Gastrocnemius medialis (tissue), 4 donors: ENCODE measurements at regions of chr9 and their contacts with region 1.

Region 1: DNA sequence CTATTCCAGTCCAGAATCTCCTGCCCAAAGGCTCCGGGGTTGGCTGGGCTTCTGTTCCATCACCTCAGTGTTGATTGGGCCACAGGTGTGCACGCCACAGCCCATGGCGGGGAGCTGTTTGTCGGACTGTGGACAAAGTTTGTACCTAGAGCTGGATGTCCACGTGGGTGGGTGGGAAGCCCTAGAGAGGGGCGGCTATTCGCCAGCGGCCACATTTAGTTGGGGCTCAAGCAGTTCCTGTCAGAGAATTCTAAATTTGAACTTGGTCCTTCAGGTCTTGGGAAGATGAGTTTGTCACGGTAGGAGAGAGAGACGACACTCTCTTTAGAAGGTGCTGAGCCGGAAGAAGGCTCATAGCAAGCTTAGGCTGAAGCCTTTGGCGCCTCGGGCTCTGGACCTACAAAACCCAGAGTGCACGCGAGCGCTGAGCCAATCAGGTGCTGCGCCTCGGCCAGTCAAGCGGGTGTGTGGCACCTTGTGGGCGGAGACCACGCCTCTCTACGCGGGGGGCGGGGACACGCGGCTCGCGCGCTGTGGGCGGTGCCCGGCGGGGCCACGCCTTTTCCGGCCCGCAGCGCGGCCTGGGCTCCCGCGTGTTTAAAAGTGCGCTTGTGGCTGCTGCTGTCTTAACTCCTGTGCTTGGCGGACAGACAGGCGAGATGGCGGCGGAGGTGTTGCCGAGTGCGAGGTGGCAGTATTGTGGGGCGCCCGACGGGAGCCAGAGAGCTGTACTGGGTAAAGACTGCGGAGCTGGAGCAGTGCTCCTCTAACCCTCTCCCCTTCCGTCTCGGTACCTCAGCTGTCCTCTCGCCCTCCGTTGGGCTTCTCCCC is at the start of gene POLR1E:
- DNase-seq: peak; percentile 86 to 94
- ATAC-seq: peak; percentile 95
- H3K4me3 ChIP-seq: peak within 1 kb of the TSS; percentile 75 to 89 (median 82)
- H3K27ac ChIP-seq: peak within 1 kb of the TSS; percentile 85 to 89 (median 88)
- H3K4me1 ChIP-seq: peaks cover 21 to 26% of the 10 kb centered on the region in 2 donors
- H3K27me3 ChIP-seq: no peaks in the 10 kb centered on the region
- CTCF ChIP-seq: no peak
- POLR2A ChIP-seq: peak; percentile 77 to 80
- total RNA-seq, gene POLR1E: 16.7 to 22.3 (median 17.6) TPM

Region 2: GRCh38 chr9:37415011-37415719 is 70.4 kb before region 1 on chr9:
- in situ Hi-C with region 1: loop called in 1 of 4 experiments (anchors 10 kb)
- intact Hi-C with region 1: loop called (anchors 5 kb)
- DNase-seq: peak in 1 of 2 donors; percentile 54
- ATAC-seq: peak; percentile 50 to 72
- H3K4me3 ChIP-seq: no peak overlapping the region
- H3K27ac ChIP-seq: no peak overlapping the region
- H3K4me1 ChIP-seq: peaks cover 5 to 23% of the 10 kb centered on the region in 2 donors
- H3K27me3 ChIP-seq: no peaks in the 10 kb centered on the region
- CTCF ChIP-seq: peak; percentile 71 to 82 (median 77)
- POLR2A ChIP-seq: no peak

Region 3: DNA sequence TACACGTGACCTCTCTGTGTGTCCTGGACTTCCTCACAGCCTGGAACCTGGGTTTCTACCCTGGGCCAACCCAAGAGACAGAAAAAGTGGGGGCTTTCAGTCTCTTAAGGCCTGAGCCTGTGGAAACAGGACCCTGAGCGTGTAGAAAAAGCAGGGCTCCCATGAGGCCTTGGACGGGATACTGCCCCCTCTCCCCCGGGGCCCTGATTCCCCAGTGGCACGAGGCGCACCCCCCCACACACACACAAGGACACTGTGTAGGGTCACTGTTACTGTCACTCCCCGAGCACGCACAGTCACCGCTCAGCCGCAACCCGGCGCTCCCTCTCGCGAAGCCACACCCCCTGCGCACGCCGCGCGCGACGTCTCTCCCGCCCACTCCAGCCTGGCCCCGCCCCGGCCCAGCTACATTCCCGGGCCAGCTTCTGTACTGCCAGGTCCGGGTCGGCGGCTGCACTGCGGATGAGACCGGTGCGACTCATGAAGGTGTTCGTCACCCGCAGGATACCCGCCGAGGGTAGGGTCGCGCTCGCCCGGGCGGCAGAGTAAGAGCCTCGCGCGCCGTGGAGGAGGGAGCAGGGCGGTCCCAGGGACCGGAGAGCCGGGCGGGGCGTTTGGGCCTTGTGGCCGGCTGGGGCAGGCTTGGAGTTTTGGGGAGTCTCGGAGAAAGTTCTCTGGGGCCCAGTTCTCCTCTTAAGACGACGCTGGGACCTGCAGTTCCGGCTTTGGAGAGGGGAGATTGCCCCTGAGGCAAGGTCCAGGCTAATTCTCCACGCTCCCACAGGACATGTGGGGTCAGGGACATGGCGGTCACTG is 63.1 kb before region 1 on chr9 and contains the start of gene GRHPR:
- in situ Hi-C with region 1: loop called in 1 of 4 experiments (anchors 10 kb)
- intact Hi-C with region 1: loop called (anchors 5 kb)
- DNase-seq: peak; percentile 83 to 88
- ATAC-seq: peak; percentile 93 to 94
- H3K4me3 ChIP-seq: peak within 1 kb of the TSS; percentile 80 to 96 (median 92)
- H3K27ac ChIP-seq: peak within 1 kb of the TSS; percentile 86 to 94 (median 92)
- H3K4me1 ChIP-seq: peaks cover 25 to 27% of the 10 kb centered on the region in 2 donors
- H3K27me3 ChIP-seq: no peaks in the 10 kb centered on the region
- CTCF ChIP-seq: no peak
- POLR2A ChIP-seq: peak; percentile 69 to 75
- total RNA-seq, gene GRHPR: 119 to 138 (median 128) TPM

Region 4: DNA sequence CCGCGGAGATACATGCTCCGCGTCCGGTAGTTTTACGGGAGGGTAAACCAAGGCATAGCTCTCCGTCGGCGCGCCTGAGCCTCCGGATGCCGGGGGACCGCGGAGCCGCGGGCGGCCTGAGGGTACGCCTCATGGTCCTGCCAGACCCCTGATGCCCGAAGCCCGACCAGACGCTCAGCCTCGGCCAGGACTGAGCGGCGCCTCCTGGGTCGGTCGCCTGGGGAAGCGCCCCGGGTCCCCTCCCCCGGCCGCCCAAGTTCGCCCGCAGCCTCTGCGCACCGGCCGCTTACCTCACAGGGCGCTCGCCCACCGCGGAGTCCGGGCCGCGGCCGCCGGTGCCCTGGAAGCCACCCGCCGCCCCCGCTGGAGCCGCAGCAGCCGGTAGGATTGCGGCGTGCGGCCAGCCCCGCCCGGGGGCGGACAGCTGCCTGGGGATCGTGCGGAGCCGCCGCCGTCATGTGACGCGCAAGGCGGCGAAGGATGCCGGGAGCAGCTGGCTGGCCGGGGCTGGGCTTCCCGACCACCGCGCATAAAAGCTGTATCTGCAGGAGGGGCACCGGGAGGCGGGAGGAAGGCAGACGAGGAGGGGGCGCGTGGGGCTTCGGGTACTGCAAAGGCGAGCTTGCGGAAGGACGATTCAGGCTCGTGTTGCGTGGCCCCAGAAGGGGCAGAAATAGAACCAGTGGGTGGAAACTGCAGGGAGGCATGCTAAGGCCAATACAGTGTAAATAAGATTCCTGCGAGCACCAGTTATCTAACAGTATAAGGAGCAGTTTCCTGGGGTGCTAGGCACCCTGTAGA is 90.5 kb after region 1 on chr9 and contains the start of gene FBXO10:
- in situ Hi-C with region 1: loop called in 1 of 4 experiments (anchors 10 kb)
- intact Hi-C with region 1: loop called (anchors 5 kb)
- DNase-seq: peak; percentile 53 to 72
- ATAC-seq: peak; percentile 62 to 71
- H3K4me3 ChIP-seq: peak within 1 kb of the TSS; percentile 84 to 96 (median 93)
- H3K27ac ChIP-seq: peak within 1 kb of the TSS; percentile 94 to 99 (median 98)
- H3K4me1 ChIP-seq: peaks cover 35 to 42% of the 10 kb centered on the region in 2 donors
- H3K27me3 ChIP-seq: no peaks in the 10 kb centered on the region
- CTCF ChIP-seq: peak in 1 of 5 experiments; percentile 24
- POLR2A ChIP-seq: peak; percentile 95 to 96
- total RNA-seq, gene FBXO10: 49.8 to 62.2 (median 53.5) TPM

Region 5: GRCh38 chr9:37800631-37801286 is 315.2 kb after region 1 on chr9 and contains the start of gene DCAF10:
- in situ Hi-C with region 1: no loop called
- intact Hi-C with region 1: loop called (anchors 10 kb)
- DNase-seq: peak; percentile 73 to 80
- ATAC-seq: peak; percentile 92 to 93
- H3K4me3 ChIP-seq: peak within 1 kb of the TSS; percentile 55 to 98 (median 80)
- H3K27ac ChIP-seq: peak within 1 kb of the TSS; percentile 74 to 91 (median 86)
- H3K4me1 ChIP-seq: peaks cover 28 to 33% of the 10 kb centered on the region in 2 donors
- H3K27me3 ChIP-seq: no peaks in the 10 kb centered on the region
- CTCF ChIP-seq: peak in 1 of 5 experiments; percentile 38
- POLR2A ChIP-seq: peak; percentile 59 to 77
- total RNA-seq, gene DCAF10: 11.0 to 24.5 (median 17.0) TPM

Region 6: GRCh38 chr9:38380872-38381534 is 895.4 kb after region 1 on chr9:
- in situ Hi-C with region 1: no loop called
- intact Hi-C with region 1: loop called (anchors 10 kb)
- DNase-seq: peak; percentile 62 to 67
- ATAC-seq: peak; percentile 57 to 71
- H3K4me3 ChIP-seq: no peak overlapping the region
- H3K27ac ChIP-seq: peak overlapping the region; percentile 82 to 94 (median 90)
- H3K4me1 ChIP-seq: peaks cover 30% of the 10 kb centered on the region in 2 donors
- H3K27me3 ChIP-seq: no peaks in the 10 kb centered on the region
- CTCF ChIP-seq: no peak
- POLR2A ChIP-seq: no peak